Gastrocnemius medialis (tissue), 4 donors: ENCODE measurements at regions of chr22 and their contacts with region 1.

Region 1: DNA sequence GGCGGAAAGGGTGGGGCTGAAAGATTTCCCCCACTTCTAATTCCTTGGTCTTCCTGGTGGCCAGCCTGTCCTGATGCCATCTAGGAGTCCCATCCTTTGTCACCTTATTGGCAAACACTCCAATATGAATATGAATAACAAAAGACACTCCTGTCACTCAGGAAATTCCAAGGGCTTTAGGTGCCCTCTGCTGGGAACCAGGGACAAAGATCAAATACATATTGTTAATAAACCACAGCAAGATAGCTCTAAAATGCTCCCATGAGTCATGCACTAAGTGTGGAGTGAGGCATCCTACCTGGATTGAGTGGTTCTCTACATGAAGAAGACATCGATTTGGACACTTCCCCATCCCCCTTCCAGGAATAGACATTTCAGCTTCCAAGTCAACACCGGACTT is 823.6 kb downstream of the TBC1D22A start:
- DNase-seq: no peak
- ATAC-seq: no peak
- H3K4me3 ChIP-seq: no peak overlapping the region
- H3K27ac ChIP-seq: no peak overlapping the region
- H3K4me1 ChIP-seq: no peaks in the 10 kb centered on the region
- H3K27me3 ChIP-seq: no peaks in the 10 kb centered on the region
- CTCF ChIP-seq: no peak
- POLR2A ChIP-seq: no peak

Region 2: DNA sequence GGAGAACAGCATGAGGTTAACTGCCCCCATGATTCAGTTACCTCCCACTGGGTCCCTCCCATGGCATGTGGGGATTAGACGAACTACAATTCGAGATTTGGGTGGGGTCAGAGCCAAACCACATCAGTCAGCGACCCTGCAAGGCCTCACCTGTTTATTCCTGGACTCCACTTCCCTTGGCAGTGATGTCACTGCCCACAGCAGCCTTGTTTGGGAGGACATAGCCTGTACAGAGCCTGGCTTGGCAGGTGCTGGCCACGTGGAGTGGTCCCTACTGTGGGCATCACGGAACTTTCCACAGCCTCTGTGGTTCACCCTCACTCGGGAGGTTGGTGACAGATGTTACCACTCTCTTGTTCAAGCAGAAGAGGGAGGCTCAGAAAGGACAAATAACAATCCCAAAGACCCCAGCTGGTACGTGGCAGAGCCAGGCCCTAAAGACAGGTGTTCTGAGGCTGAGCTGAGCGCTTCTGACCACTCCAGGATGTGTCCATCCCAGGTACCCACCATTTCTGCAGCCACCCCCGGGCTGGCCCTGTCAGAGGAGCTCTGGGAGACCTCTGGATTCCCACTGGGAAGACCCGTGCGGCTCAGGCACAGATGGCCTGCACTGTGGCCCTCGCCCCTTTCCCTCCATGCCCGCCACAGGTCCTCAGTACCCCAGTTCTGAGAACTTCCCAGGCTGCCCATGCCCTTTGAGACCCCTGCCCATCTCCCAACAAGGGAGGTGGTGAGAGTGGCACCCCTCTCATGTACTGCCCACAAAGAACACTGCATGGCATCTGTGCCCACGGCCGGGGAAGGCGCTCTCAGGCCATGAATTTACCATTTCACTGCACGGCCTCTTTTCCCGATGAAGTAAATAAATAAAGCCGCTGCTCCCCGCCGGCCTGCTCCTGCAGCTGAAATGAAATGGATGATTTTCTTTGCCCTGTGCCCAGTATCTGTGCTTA is 217.8 kb before region 1 on chr22:
- in situ Hi-C with region 1: no loop called
- intact Hi-C with region 1: no loop called
- DNase-seq: no peak
- ATAC-seq: no peak
- H3K4me3 ChIP-seq: no peak overlapping the region
- H3K27ac ChIP-seq: no peak overlapping the region
- H3K4me1 ChIP-seq: no peaks in the 10 kb centered on the region
- H3K27me3 ChIP-seq: no peaks in the 10 kb centered on the region
- CTCF ChIP-seq: no peak
- POLR2A ChIP-seq: no peak

Region 3: GRCh38 chr22:47495110-47495509 is 90.9 kb before region 1 on chr22:
- in situ Hi-C with region 1: loop called in 1 of 4 experiments (anchors 25 kb)
- intact Hi-C with region 1: no loop called
- DNase-seq: no peak
- ATAC-seq: no peak
- H3K4me3 ChIP-seq: no peak overlapping the region
- H3K27ac ChIP-seq: no peak overlapping the region
- H3K4me1 ChIP-seq: no peaks in the 10 kb centered on the region
- H3K27me3 ChIP-seq: no peaks in the 10 kb centered on the region
- CTCF ChIP-seq: no peak
- POLR2A ChIP-seq: no peak

Region 4: DNA sequence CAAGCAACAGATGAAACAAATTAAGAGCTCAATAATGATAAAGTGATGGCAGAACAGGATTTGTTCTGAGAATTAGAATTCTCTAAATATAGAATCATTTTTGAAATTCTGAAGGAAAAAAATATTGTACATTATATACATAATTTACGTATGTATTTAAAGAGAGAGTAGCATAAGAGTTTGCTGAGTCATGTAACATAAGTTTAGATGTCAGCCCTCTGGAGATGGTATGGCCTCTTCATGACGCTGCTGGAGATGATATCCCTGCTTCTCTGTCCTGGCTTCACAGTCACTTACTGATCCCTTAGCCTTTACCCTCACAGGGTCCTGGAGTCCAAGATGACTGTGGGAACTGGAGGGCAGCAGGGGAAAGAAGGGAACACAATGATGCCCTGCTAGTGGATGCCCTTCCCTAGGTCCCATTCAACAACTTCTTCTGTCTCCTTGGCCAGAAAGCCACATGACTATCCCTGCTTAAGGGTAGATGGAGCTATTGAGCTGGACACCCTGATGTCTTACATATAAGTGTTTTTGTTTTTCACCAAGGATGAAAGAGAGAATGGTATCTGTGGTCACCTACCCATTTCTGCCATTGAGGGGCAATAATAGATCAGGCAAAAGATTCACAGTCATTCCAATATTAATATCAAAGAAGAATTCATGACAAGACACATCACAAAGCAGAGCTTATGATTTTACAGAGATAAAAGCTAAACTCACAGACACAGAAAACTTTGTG is 70.5 kb before region 1 on chr22:
- in situ Hi-C with region 1: no loop called
- intact Hi-C with region 1: no loop called
- DNase-seq: no peak
- ATAC-seq: no peak
- H3K4me3 ChIP-seq: no peak overlapping the region
- H3K27ac ChIP-seq: no peak overlapping the region
- H3K4me1 ChIP-seq: no peaks in the 10 kb centered on the region
- H3K27me3 ChIP-seq: no peaks in the 10 kb centered on the region
- CTCF ChIP-seq: no peak
- POLR2A ChIP-seq: no peak

Region 5: GRCh38 chr22:47695176-47695575 is 109.2 kb after region 1 on chr22:
- in situ Hi-C with region 1: no loop called
- intact Hi-C with region 1: no loop called
- DNase-seq: no peak
- ATAC-seq: no peak
- H3K4me3 ChIP-seq: no peak overlapping the region
- H3K27ac ChIP-seq: no peak overlapping the region
- H3K4me1 ChIP-seq: no peaks in the 10 kb centered on the region
- H3K27me3 ChIP-seq: no peaks in the 10 kb centered on the region
- CTCF ChIP-seq: no peak
- POLR2A ChIP-seq: no peak

Region 6: DNA sequence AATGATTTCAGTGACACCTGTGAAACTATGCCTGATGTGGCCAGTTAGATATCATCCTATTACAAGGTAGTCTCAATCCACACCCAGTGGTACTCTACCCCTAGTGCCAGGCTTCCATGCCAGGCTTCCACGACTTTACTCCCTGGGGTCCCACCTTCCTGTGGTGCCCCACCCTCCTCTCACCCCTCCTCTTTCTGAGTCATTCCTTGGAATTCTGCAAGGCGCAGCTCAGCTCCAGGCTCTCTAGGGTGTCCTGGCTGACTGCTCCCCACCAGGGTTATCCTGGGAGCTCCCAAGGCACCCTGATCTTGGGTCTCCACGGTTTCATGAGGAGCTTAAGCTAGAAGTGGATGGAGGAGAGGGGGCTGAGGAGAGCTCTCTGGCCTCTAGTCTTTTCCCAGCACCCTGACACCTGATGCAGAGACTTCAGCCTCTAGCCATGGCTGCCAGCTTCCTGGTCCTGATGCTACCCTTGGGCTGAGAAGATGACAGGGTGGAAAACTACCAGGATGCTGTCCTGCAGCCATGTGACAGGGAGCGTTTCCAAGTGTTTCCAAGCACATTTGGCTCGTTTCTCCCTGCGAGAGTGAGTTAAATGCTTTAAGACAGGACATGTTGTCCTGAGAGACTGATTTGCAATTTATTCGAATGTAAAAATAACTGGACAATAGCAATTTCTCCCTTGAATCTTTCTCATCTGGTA is 637.6 kb after region 1 on chr22:
- in situ Hi-C with region 1: no loop called
- intact Hi-C with region 1: no loop called
- DNase-seq: no peak
- ATAC-seq: no peak
- H3K4me3 ChIP-seq: no peak overlapping the region
- H3K27ac ChIP-seq: no peak overlapping the region
- H3K4me1 ChIP-seq: no peaks in the 10 kb centered on the region
- H3K27me3 ChIP-seq: no peaks in the 10 kb centered on the region
- CTCF ChIP-seq: no peak
- POLR2A ChIP-seq: no peak